ENCODE measurements at regions of chr3 and their contacts with region 1.

Region 1: GRCh38 chr3:50347194-50347918 is 1.8 kb upstream of the ZMYND10 start:
- DNase-seq: peak in 1 of 2 donors; percentile 51
- ATAC-seq: no peak
- H3K4me3 ChIP-seq: no peak overlapping the region
- H3K27ac ChIP-seq: peak overlapping the region in 3 of 4 donors; percentile 7 to 14 (median 12)
- H3K4me1 ChIP-seq: peaks cover 24 to 45% of the 10 kb centered on the region in 2 donors
- H3K27me3 ChIP-seq: no peaks in the 10 kb centered on the region
- CTCF ChIP-seq: peak in 4 of 5 experiments; percentile 52 to 62 (median 58)
- POLR2A ChIP-seq: no peak

Region 2: GRCh38 chr3:50370594-50370993 is 23.2 kb after region 1 on chr3:
- in situ Hi-C with region 1: no loop called
- intact Hi-C with region 1: no loop called
- DNase-seq: no peak
- ATAC-seq: no peak
- H3K4me3 ChIP-seq: no peak overlapping the region
- H3K27ac ChIP-seq: no peak overlapping the region
- H3K4me1 ChIP-seq: no peaks in the 10 kb centered on the region
- H3K27me3 ChIP-seq: no peaks in the 10 kb centered on the region
- CTCF ChIP-seq: no peak
- POLR2A ChIP-seq: no peak

Region 3: DNA sequence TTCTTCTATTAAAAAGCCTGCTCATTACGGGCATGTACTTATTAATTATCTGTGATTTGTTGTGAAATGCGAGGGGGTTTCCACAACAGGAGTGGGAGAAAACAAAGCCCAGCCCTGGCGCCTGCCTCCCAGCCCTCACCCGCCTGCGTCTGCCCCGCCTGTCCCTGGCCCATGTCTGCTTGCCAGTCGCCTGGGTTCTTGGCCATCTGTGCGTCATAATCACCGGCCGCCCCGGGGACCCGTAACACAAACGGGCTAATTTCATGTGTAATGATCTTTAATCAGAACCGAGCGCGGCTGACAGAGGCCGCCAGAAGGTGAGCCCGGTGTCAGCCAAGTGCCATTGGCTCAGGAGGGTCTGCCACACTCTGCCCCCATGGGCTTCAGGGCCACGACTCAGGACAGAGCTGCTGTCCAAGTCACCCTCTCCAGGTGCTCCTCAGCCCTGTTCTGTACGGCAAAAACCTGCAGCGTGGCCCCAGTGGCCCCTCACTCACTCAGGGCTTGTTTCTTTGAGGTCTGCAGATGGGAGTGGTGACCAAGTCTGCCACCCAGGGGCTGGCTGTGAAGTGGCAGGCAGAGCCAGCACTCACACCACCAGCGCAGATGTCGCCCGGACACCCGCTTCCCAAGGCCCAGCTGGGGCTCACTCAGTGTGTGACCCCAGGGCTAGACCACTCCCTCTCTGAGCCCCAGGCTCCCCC is 40.8 kb after region 1 on chr3:
- in situ Hi-C with region 1: no loop called
- intact Hi-C with region 1: loop called (anchors 1 kb)
- DNase-seq: no peak
- ATAC-seq: no peak
- H3K4me3 ChIP-seq: no peak overlapping the region
- H3K27ac ChIP-seq: no peak overlapping the region
- H3K4me1 ChIP-seq: peaks cover 18 to 23% of the 10 kb centered on the region in 2 donors
- H3K27me3 ChIP-seq: no peaks in the 10 kb centered on the region
- CTCF ChIP-seq: peak in 1 of 5 experiments; percentile 26
- POLR2A ChIP-seq: no peak

Region 4: DNA sequence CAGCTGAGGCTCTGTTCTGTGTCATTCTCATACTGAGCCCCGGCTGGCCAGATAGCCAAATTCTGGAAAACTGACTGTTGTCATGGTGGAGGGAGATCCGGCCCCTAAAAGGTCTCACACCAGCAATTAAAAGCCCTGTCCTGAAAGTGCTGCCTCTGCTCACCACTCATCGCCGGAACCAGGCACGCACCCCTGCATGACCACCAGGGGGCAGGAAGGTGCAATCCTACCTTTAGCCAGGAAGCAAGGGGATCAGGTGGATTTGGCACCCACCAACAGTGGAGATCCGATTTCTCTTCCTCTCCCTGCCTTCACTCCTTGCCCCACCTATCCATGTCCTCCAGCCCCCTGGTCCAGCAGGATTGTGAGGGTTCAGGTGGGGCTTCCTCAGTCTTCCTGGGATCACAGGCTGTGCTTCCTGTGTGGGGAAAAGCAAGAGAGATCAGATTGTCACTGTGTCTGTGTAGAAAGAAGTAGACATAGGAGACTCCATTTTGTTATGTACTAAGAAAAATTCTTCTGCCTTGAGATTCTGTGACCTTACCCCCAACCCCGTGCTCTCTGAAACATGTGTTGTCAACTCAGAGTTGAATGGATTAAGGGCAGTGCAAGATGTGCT is 172.2 kb after region 1 on chr3:
- in situ Hi-C with region 1: no loop called
- intact Hi-C with region 1: loop called (anchors 1 kb)
- DNase-seq: peak; percentile 22 to 56
- ATAC-seq: peak; percentile 73 to 75
- H3K4me3 ChIP-seq: no peak overlapping the region
- H3K27ac ChIP-seq: no peak overlapping the region
- H3K4me1 ChIP-seq: peaks cover 0 to 12% of the 10 kb centered on the region in 2 donors
- H3K27me3 ChIP-seq: no peaks in the 10 kb centered on the region
- CTCF ChIP-seq: peak; percentile 68 to 92 (median 85)
- POLR2A ChIP-seq: no peak

Measured in gastrocnemius medialis (tissue), 4 donors.